ENCODE measurements at regions of chr17 and their contacts with region 1.

Region 1: DNA sequence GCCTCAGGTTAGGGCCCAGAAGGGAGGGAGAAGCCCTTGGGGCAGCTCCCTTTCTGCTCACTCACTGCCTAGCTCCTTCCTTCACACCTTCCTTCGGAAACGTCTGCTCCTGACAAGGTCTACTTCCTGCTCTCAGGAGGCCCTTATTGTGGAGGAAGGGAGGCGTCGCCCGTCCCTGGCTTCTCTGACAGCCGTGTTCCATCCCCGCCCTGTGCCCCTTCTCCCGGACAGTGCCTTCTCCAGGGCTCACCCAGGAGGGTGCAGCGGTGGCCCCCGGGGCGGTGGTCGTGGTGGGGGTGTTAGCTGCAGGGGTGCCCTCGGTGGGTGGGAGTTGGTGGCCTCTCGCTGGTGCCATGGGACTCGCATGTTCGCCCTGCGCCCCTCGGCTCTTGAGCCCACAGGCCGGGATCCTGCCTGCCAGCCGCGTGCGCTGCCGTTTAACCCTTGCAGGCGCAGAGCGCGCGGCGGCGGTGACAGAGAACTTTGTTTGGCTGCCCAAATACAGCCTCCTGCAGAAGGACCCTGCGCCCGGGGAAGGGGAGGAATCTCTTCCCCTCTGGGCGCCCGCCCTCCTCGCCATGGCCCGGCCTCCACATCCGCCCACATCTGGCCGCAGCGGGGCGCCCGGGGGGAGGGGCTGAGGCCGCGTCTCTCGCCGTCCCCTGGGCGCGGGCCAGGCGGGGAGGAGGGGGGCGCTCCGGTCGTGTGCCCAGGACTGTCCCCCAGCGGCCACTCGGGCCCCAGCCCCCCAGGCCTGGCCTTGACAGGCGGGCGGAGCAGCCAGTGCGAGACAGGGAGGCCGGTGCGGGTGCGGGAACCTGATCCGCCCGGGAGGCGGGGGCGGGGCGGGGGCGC is 231.9 kb downstream of the SEC14L1 start:
- DNase-seq: peak; percentile 87
- ATAC-seq: peak; percentile 72
- H3K4me3 ChIP-seq: peak overlapping the region; percentile 78
- H3K27ac ChIP-seq: peak overlapping the region; percentile 88
- H3K4me1 ChIP-seq: peaks cover 35% of the 10 kb centered on the region
- H3K27me3 ChIP-seq: no peaks in the 10 kb centered on the region
- CTCF ChIP-seq: no peak
- POLR2A ChIP-seq: no peak
- RAD21 ChIP-seq: peak; percentile 19; the same call in 1 of the 2 replicates

Region 2: DNA sequence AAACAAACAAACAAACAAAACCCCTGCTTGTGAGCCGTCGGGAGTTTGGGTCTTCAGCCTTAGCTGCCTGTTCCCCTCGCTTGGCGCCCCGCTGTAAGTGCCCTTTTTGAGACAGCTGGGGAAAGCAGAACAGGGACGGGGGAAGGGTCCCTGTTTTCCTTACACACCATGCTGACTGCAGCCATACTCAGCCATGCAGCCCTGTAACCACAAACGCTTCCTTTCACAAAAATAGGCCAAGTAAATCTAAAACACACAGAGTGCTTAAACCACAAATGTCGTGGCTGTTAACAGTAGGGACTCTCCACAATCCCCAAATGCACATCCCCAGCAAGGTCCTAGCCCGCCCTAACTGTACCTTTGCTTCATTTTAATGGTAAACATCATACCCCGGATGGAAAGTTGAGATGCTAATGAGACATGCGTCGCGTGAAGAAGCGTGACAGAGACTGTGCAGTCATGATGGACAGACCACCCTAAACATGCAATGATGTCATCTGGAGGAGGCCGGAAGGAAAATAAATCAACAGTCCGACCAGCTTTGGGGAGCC is 374.6 kb before region 1 on chr17:
- CTCF ChIA-PET with region 1: no interaction called
- POLR2A ChIA-PET with region 1: no interaction called
- dilution Hi-C with region 1: no loop called
- in situ Hi-C with region 1: no loop called
- intact Hi-C with region 1: no loop called
- DNase-seq: no peak
- ATAC-seq: no peak
- H3K4me3 ChIP-seq: no peak overlapping the region
- H3K27ac ChIP-seq: no peak overlapping the region
- H3K4me1 ChIP-seq: peaks cover 5% of the 10 kb centered on the region
- H3K27me3 ChIP-seq: peaks cover 35% of the 10 kb centered on the region
- CTCF ChIP-seq: no peak
- POLR2A ChIP-seq: no peak
- RAD21 ChIP-seq: no peak

Region 3: GRCh38 chr17:77088455-77089123 is 284.1 kb before region 1 on chr17:
- CTCF ChIA-PET with region 1: no interaction called
- POLR2A ChIA-PET with region 1: no interaction called
- dilution Hi-C with region 1: no loop called
- in situ Hi-C with region 1: no loop called
- intact Hi-C with region 1: loop called (anchors 5 kb)
- DNase-seq: peak; percentile 98
- ATAC-seq: peak; percentile 95
- H3K4me3 ChIP-seq: peak overlapping the region; percentile 61
- H3K27ac ChIP-seq: peak overlapping the region; percentile 78
- H3K4me1 ChIP-seq: no peaks in the 10 kb centered on the region
- H3K27me3 ChIP-seq: peaks cover 2% of the 10 kb centered on the region; the same call in 1 of the 2 replicates
- CTCF ChIP-seq: peak; percentile 90
- POLR2A ChIP-seq: peak; percentile 62; the same call in 1 of the 2 replicates
- RAD21 ChIP-seq: peak; percentile 56

Region 4: GRCh38 chr17:77319211-77320043 is 53.2 kb before region 1 on chr17:
- CTCF ChIA-PET with region 1: no interaction called
- POLR2A ChIA-PET with region 1: no interaction called
- dilution Hi-C with region 1: no loop called
- in situ Hi-C with region 1: no loop called
- intact Hi-C with region 1: no loop called
- DNase-seq: peak; percentile 86
- ATAC-seq: peak; percentile 48
- H3K4me3 ChIP-seq: peak overlapping the region; percentile 36; the same call in 1 of the 2 replicates
- H3K27ac ChIP-seq: peak overlapping the region; percentile 96
- H3K4me1 ChIP-seq: peaks cover 59% of the 10 kb centered on the region
- H3K27me3 ChIP-seq: no peaks in the 10 kb centered on the region
- CTCF ChIP-seq: no peak
- POLR2A ChIP-seq: peak; percentile 41; the same call in 1 of the 2 replicates
- RAD21 ChIP-seq: no peak

Region 5: DNA sequence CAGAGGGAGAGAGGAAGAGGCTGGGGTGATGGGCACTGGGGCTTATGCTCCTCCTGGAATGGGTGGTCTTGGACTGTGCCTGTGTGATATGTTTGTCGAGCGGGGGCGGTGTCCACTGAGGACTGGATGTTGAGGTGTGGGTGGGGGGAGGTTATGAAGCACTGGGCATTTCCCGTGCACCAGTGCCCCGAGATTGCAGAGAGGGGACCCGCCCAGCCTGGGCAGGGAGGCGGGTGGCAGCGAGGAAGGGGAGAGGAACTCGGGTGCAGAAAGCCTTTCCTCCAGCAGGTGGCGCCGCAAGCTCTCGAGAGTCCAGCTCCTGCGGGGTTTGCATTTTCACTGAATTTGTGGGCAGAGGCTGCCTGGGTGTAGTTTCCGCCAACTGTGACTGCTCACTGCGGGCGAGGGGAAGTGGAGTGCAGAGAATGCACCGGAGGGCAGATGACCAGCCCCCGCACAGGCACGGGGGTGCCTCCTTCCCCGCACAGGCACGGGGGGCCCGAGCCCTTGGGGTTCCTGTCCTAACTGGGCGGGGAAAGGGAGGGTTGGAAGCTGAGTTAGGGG is 41.3 kb before region 1 on chr17:
- CTCF ChIA-PET with region 1: no interaction called
- POLR2A ChIA-PET with region 1: interaction called, 3 read pairs
- dilution Hi-C with region 1: no loop called
- in situ Hi-C with region 1: no loop called
- intact Hi-C with region 1: loop called (anchors 1 kb)
- DNase-seq: peak; percentile 87
- ATAC-seq: peak; percentile 95
- H3K4me3 ChIP-seq: no peak overlapping the region
- H3K27ac ChIP-seq: peak overlapping the region; percentile 71
- H3K4me1 ChIP-seq: peaks cover 3% of the 10 kb centered on the region
- H3K27me3 ChIP-seq: no peaks in the 10 kb centered on the region
- CTCF ChIP-seq: peak; percentile 96
- POLR2A ChIP-seq: peak; percentile 45; the same call in 1 of the 2 replicates
- RAD21 ChIP-seq: peak; percentile 99

Region 6: DNA sequence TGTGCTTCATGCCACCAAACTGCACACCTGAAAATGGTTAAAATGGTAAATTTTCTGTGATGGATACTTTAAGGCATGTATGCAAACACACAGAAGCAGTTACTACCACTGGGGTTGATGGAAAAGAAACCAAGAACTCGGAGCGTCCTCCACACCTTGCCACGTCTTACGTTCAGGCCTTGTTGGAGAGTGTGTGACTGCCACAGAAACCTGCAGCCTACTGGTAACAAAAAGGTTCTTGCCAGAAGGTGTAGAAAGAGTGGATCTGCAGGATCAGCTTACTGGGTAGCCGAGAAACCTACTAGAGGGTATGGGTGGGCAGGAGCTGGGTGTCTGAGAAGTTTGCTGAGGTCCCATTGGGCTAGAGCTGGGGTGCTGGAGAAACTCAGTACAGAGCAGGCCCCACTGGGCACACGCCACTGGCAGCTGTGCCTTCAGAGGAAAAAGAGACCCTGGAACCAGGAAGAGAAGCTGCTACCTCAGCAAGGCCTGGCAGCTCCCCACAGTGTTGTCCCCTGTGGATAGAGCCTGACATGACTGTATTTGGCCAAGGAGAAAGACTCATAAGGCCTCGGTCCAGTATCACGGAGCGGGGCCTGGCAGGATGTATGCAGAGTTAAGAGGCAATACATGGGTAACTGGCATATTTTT is 27.3 kb before region 1 on chr17:
- CTCF ChIA-PET with region 1: no interaction called
- POLR2A ChIA-PET with region 1: no interaction called
- dilution Hi-C with region 1: no loop called
- in situ Hi-C with region 1: no loop called
- intact Hi-C with region 1: no loop called
- DNase-seq: no peak
- ATAC-seq: no peak
- H3K4me3 ChIP-seq: no peak overlapping the region
- H3K27ac ChIP-seq: no peak overlapping the region
- H3K4me1 ChIP-seq: peaks cover 7% of the 10 kb centered on the region
- H3K27me3 ChIP-seq: no peaks in the 10 kb centered on the region
- CTCF ChIP-seq: no peak
- POLR2A ChIP-seq: no peak
- RAD21 ChIP-seq: no peak

Region 7: DNA sequence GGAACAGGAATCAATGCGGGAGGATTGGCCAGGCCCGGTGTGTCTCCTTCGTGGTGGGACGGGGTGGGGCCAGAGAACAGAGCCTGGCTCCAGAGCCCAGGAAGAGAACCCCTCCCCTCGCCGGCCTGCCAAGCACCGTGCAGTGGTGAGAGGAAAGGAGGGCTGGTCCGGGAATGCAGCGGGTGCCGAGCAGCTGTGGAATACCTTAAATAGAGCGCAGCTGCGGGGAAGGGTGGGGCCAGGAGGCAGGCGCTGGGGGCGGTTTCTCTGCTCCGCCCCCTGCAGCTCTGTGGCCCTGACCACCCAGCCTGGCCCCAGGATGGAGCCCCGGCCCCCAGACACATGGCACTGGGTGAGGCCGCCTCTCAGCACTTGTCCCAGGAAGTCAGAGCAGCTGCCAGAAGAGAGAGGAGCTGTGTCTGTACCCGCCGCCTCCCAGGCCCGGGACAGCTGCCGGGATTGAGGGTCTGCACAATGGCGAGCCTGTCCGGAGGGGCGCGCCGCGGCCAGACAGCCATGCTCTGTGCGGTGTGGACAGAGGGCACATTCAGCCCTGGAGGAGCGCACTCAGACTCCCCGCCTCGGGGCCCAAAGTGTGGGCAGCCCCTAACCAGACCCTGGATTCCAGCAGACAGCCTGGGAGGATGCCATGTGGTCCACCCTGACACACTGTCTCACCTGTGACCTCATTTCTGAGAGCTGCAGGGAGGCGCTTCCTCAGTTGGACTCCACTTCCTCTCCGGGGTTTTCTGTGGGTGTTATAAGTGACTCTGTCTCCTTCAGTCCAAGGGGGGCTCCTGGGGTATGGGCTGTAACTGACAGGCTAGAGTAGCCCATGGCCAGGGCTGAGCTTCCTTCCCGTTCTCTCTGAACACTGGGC is 36.9 kb after region 1 on chr17:
- CTCF ChIA-PET with region 1: no interaction called
- POLR2A ChIA-PET with region 1: no interaction called
- dilution Hi-C with region 1: no loop called
- in situ Hi-C with region 1: no loop called
- intact Hi-C with region 1: loop called (anchors 5 kb)
- DNase-seq: peak; percentile 58
- ATAC-seq: peak; percentile 43
- H3K4me3 ChIP-seq: no peak overlapping the region
- H3K27ac ChIP-seq: peak overlapping the region; percentile 58
- H3K4me1 ChIP-seq: peaks cover 62% of the 10 kb centered on the region
- H3K27me3 ChIP-seq: no peaks in the 10 kb centered on the region
- CTCF ChIP-seq: no peak
- POLR2A ChIP-seq: no peak
- RAD21 ChIP-seq: no peak

Region 8: GRCh38 chr17:77420804-77421629 is 48.3 kb after region 1 on chr17:
- CTCF ChIA-PET with region 1: interaction called, 3 read pairs
- POLR2A ChIA-PET with region 1: no interaction called
- dilution Hi-C with region 1: no loop called
- in situ Hi-C with region 1: loop called (anchors 5 kb)
- intact Hi-C with region 1: loop called (anchors 2 kb)
- DNase-seq: peak; percentile 93
- ATAC-seq: peak; percentile 38
- H3K4me3 ChIP-seq: no peak overlapping the region
- H3K27ac ChIP-seq: peak overlapping the region; percentile 68
- H3K4me1 ChIP-seq: peaks cover 60% of the 10 kb centered on the region
- H3K27me3 ChIP-seq: no peaks in the 10 kb centered on the region
- CTCF ChIP-seq: no peak
- POLR2A ChIP-seq: no peak; the same call in 1 of the 2 replicates
- RAD21 ChIP-seq: no peak

Region 9: DNA sequence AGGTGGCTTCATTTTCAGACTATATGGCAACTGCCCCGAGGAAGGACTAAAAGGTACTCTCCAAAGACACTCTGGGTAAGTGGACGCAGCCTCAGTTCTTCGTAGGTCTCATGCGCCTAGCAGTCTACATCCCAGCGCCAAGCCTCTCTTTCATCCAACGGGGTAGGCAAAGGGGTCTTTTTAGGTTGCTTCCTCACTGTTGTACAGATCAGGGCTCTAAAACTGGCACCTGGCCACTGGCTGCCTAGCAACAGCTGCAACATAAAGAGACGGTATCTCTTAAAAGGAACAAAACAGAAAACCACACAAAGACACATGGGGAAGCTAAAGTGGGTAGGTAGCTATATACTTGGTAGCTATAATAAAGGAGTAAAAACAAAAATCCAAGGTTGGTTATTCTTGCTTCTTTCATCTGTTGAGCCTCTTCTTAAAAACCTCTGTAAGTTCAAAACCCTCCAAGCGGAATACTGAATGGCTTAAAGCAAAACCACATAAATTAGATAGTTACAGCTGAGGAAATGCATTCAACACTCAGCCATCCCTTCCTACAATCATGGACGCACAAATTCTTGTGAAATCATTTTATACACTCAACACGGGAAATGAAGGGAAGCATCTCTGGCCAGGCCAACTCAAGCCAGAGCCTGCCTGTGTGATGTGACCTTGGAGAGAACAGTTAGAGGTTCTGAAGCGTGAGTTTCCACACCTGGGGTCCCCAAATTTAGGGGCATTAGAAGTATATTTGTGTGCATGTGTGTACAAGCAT is 1386.7 kb after region 1 on chr17:
- CTCF ChIA-PET with region 1: no interaction called
- POLR2A ChIA-PET with region 1: interaction called, 10 read pairs
- dilution Hi-C with region 1: no loop called
- in situ Hi-C with region 1: no loop called
- intact Hi-C with region 1: no loop called
- DNase-seq: peak; percentile 43
- ATAC-seq: no peak
- H3K4me3 ChIP-seq: no peak overlapping the region
- H3K27ac ChIP-seq: no peak overlapping the region
- H3K4me1 ChIP-seq: peaks cover 8% of the 10 kb centered on the region
- H3K27me3 ChIP-seq: no peaks in the 10 kb centered on the region
- CTCF ChIP-seq: no peak
- POLR2A ChIP-seq: no peak
- RAD21 ChIP-seq: no peak

Measured in IMR-90 (cell line).